Activated CD4-positive, alpha-beta T cell treated with anti-CD3 and anti-CD28 coated beads for 36 hours (primary cell): ENCODE measurements at regions of chr12 and their contacts with region 1.

Region 1: GRCh38 chr12:123365025-123365917 is 624 bp upstream of the SBNO1 start:
- DNase-seq: peak; percentile 98
- ATAC-seq: peak; percentile 82
- H3K4me3 Mint-ChIP-seq: peak overlapping the region; percentile 86
- H3K27ac Mint-ChIP-seq: peak overlapping the region; percentile 98
- H3K4me1 Mint-ChIP-seq: peaks cover 19% of the 10 kb centered on the region
- H3K27me3 Mint-ChIP-seq: no peaks in the 10 kb centered on the region

Region 2: GRCh38 chr12:122752464-122753318 is 612.6 kb before region 1 on chr12 and contains the start of gene DENR:
- CTCF ChIA-PET with region 1: no interaction called
- POLR2A ChIA-PET with region 1: no interaction called
- intact Hi-C with region 1: loop called in 1 of 2 experiments (anchors 1 kb)
- DNase-seq: peak; percentile 100
- ATAC-seq: peak; percentile 95
- H3K4me3 Mint-ChIP-seq: peak within 1 kb of the TSS; percentile 92
- H3K27ac Mint-ChIP-seq: peak within 1 kb of the TSS; percentile 96
- H3K4me1 Mint-ChIP-seq: peaks cover 53% of the 10 kb centered on the region
- H3K27me3 Mint-ChIP-seq: no peaks in the 10 kb centered on the region
- total RNA-seq, gene DENR: 64.1 to 76.9 TPM

Region 3: GRCh38 chr12:123260081-123260480 is 105.2 kb before region 1 on chr12:
- CTCF ChIA-PET with region 1: no interaction called
- POLR2A ChIA-PET with region 1: no interaction called
- intact Hi-C with region 1: no loop called
- DNase-seq: no peak
- ATAC-seq: no peak
- H3K4me3 Mint-ChIP-seq: no peak overlapping the region
- H3K27ac Mint-ChIP-seq: no peak overlapping the region
- H3K4me1 Mint-ChIP-seq: peaks cover 13% of the 10 kb centered on the region
- H3K27me3 Mint-ChIP-seq: no peaks in the 10 kb centered on the region

Region 4: DNA sequence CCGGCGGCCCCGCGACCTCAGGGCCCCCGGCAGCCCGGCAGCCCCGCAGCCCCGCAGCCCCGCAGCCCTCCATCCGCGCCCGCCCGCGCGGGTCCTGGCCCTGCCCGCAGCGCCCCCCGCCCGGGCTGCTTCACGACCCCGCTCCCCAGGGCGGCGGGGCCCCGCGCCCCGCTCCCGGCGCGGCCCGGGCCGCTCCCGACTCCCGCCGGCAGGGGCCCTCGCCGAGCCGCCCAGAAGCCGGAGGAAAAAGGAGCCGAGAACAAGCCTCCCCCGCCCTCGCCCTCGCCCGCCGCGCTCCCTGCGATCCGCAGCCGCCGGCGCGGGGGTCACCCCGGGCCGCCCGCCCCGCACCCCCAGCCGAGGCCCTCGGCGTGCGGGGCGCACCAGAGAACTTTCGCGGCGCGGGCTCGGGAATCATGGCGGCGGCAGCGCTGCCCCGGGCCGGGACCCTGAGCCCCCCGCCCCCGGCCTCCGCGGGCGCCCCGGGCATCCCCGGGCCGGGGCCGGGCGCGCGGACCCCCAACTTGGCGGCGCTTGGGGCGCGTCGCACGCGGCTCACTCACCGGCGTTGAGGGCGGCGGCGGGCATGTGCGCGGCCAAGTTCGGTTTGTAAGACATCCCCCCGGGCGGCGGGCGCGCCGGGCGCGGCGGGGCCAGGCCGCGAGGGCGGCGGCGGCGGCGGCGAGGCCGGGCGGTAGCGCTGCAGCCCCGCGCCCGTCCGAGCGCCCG is 94.1 kb before region 1 on chr12:
- CTCF ChIA-PET with region 1: interaction called, 3 read pairs
- POLR2A ChIA-PET with region 1: no interaction called
- intact Hi-C with region 1: loop called in 1 of 2 experiments (anchors 1 kb)
- DNase-seq: peak; percentile 90
- ATAC-seq: peak; percentile 75
- H3K4me3 Mint-ChIP-seq: peak overlapping the region; percentile 86
- H3K27ac Mint-ChIP-seq: no peak overlapping the region
- H3K4me1 Mint-ChIP-seq: peaks cover 23% of the 10 kb centered on the region
- H3K27me3 Mint-ChIP-seq: no peaks in the 10 kb centered on the region

Region 5: DNA sequence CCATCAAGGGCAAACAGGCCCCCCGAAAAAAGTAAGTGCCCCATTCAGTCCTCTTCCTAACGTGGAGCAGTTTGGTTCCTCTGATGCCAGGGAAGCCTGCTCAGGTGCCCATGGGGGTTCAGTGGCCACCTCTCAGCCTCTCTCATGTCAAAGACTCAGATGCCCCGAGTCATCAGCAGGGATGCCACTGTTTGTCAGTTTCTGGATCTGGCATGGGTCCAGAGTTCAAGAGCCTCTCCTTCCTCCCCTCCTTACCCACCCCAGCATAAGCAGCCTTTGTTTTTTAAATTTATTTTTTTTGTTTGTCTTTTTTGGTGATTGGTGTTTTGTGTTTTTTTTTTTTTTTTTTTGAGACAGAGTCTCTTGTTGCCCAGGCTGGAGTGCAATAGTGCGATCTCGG is 30.0 kb after region 1 on chr12:
- CTCF ChIA-PET with region 1: no interaction called
- POLR2A ChIA-PET with region 1: no interaction called
- intact Hi-C with region 1: no loop called
- DNase-seq: no peak
- ATAC-seq: no peak
- H3K4me3 Mint-ChIP-seq: no peak overlapping the region
- H3K27ac Mint-ChIP-seq: no peak overlapping the region
- H3K4me1 Mint-ChIP-seq: peaks cover 22% of the 10 kb centered on the region
- H3K27me3 Mint-ChIP-seq: no peaks in the 10 kb centered on the region

Region 6: DNA sequence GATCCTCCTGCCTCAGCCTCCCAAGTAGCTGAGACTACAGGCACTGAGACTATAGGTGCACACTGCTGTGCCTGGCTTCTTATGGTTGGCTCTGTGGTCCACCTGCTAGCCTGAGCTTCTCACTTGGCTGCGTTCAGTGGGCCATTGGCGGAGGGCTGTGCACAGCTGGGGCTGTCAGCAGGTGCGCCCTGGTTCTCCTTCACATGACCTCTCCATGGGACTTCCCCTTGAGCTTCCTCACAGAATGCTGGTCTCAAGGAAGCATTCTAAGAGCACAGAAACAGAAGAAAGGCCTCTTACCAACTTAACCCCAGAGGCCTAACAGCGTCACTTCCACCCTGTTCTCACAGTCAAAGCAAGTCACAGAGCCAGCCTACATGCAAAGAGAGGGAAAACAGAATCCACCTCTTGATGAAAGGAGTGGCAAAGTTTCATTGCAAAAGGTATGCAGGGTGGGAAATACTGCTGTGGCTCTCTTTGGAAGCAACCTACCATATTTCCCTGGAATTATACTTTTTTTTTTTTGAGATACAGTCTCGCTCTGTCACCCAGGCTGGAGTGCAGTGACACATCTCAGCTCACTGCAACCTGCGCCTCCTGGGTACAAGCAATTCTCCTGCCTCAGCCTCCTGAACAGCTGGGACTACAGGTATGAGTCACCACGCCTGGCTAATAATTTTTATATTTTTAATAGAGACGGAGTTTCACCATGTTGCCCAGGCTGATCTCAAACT is 61.9 kb after region 1 on chr12:
- CTCF ChIA-PET with region 1: interaction called, 3 read pairs
- POLR2A ChIA-PET with region 1: no interaction called
- intact Hi-C with region 1: loop called in 1 of 2 experiments (anchors 2 kb)
- DNase-seq: peak; percentile 53
- ATAC-seq: peak; percentile 79
- H3K4me3 Mint-ChIP-seq: peak overlapping the region; percentile 40
- H3K27ac Mint-ChIP-seq: peak overlapping the region; percentile 84
- H3K4me1 Mint-ChIP-seq: peaks cover 35% of the 10 kb centered on the region
- H3K27me3 Mint-ChIP-seq: no peaks in the 10 kb centered on the region

Region 7: DNA sequence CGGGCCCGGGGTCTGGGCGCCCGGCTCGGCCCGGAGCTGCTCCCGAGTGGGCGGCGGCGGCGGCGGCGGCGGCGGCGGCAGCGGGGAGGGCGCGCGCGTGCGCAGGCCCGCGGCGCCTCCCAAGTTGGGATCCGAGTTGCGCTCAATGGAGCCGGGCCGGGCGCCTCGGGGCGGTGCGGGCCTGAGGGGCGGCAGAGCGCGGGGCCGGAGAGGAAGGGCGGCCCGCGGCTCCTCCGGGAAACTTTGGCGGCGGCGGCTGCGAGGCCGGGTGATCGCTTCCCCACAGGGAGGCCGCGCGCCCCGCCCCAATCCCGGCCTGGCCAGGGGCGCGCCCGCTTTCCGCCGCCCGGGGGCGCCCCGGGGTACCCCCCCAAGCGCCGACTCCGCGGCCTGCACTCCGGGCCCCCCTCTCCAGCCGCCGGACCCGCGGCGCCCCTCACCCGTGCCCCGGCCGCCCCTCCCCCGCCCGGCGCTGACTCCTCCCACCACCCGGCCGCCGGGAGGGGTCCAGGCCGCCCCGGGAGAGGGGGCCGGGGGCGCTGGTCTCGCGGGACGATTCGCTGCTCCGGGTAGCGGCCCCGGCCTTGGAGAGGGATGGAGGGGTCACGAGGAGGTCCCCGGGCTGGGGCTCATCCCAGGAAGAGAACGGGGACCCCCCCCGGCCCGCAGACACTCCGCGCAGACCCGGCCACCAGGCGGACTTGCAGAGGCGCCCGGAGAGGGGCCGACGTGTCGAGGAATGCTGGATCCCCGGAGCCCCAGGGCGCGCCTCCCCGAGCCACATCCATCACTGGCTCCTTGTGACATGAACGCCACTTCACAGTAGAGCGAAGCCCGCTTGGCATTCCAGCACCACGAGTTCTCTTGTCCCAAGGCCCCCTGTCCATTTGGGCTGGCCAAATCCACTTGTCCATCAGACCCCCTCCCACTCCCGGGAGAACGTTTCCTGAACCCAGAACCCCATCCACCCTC is 168.7 kb after region 1 on chr12 and contains the start of gene RILPL1:
- CTCF ChIA-PET with region 1: no interaction called
- POLR2A ChIA-PET with region 1: interaction called, 11 read pairs
- intact Hi-C with region 1: loop called in 1 of 2 experiments (anchors 1 kb)
- DNase-seq: peak; percentile 63
- ATAC-seq: peak; percentile 64
- H3K4me3 Mint-ChIP-seq: peak within 1 kb of the TSS; percentile 78
- H3K27ac Mint-ChIP-seq: peak within 1 kb of the TSS; percentile 74
- H3K4me1 Mint-ChIP-seq: peaks cover 23% of the 10 kb centered on the region
- H3K27me3 Mint-ChIP-seq: peaks cover 3% of the 10 kb centered on the region
- total RNA-seq, gene RILPL1: 4.7 to 5.3 TPM

Region 8: DNA sequence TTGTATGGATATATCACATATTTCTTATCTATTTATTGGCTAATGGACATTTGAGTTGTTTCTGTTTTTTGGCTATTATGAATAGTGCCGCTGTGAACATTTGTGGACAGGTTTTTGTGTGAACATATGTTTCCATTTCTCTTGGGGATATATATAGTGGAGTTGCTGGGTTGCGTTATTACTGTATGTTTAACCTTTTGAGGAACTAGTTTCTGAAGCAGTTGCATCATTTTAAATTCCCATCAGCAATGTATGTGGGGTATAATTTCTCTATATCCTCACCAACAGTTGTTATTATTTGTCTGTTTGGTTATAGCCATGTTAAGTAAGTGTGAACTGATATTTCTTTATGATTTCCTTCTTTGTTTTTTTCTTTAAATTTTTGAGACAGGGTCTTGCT is 316.3 kb after region 1 on chr12:
- CTCF ChIA-PET with region 1: no interaction called
- POLR2A ChIA-PET with region 1: no interaction called
- intact Hi-C with region 1: no loop called
- DNase-seq: no peak
- ATAC-seq: no peak
- H3K4me3 Mint-ChIP-seq: no peak overlapping the region
- H3K27ac Mint-ChIP-seq: peak overlapping the region; percentile 21
- H3K4me1 Mint-ChIP-seq: peaks cover 10% of the 10 kb centered on the region
- H3K27me3 Mint-ChIP-seq: no peaks in the 10 kb centered on the region

Region 9: GRCh38 chr12:123713398-123713797 is 348.1 kb after region 1 on chr12:
- CTCF ChIA-PET with region 1: no interaction called
- POLR2A ChIA-PET with region 1: no interaction called
- intact Hi-C with region 1: loop called in 1 of 2 experiments (anchors 1 kb)
- DNase-seq: peak; percentile 35
- ATAC-seq: peak; percentile 11
- H3K4me3 Mint-ChIP-seq: peak overlapping the region; percentile 96
- H3K27ac Mint-ChIP-seq: peak overlapping the region; percentile 96
- H3K4me1 Mint-ChIP-seq: peaks cover 46% of the 10 kb centered on the region
- H3K27me3 Mint-ChIP-seq: no peaks in the 10 kb centered on the region